Cardiac septum (tissue), 1 donor: ENCODE measurements at regions of chr4 and their contacts with region 1.

Region 1: DNA sequence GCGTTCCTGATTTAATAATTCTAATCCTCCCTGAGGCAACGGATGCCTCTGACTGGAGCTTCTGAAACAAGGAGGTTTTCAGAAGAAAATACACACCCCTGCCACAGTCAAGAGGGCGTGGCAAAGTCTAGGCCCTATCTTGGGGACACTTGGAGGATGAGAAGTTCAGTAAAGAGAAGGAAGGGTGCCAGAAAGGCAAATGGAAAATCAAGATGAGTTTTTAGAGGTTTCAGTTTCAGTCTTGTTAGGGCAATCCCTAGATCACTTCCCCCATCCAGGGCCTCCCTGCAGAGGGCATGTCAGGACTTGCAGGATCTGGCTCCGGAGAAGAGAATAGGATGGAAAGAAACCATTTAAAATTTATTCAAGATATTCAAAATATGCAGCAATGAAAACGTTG is 28.5 kb upstream of the FGF2 start:
- DNase-seq: no peak

Region 2: GRCh38 chr4:122764821-122765215 is 33.3 kb before region 1 on chr4:
- intact Hi-C with region 1: loop called (anchors 5 kb)
- DNase-seq: no peak